Aorta (tissue), 5 donors: ENCODE measurements at regions of chr15 and their contacts with region 1.

Region 1: DNA sequence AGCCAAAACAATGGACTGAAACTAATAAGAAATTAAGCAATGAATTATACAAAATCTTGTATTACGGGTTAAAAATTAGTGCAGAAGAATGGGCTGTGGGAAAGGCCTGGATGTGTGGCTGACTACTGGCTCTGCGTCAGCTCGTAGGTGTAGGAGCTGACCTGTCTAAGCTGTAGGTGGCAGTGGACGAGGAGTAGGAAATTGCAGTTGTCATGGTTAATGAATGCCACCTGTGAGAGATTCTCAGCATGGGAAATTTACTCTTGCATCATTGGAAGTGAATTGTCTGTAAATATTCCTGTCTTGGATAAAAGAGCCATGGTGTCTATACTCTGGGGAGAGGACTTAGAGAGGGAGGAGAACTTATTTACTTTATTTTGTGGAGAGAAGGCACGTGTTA is 23.4 kb downstream of the CHRNA7 start:
- DNase-seq: no peak
- ATAC-seq: no peak
- H3K4me3 ChIP-seq: no peak overlapping the region
- H3K27ac ChIP-seq: no peak overlapping the region
- H3K4me1 ChIP-seq: no peaks in the 10 kb centered on the region
- H3K27me3 ChIP-seq: no peaks in the 10 kb centered on the region

Region 2: DNA sequence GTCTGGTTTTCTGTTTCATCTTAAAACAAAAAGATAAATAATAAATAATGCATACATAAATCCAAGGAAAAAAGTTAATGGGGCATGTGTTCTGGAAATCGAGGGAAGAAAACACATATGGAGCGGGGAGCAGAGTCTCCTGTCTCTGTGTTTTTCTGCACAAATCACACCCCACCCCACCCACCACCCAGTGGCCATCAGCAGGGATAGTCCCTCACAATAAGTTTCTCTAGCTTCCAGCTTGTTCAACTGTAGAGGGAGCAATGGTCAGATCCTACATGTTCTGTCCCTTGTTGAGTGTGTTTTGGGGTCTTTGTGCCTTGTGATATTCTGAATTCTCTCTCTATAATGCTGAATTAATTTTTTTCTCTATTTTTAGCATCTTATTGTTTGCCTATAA is 50.2 kb before region 1 on chr15:
- intact Hi-C with region 1: loop called in 1 of 2 experiments (anchors 10 kb)
- DNase-seq: no peak
- ATAC-seq: no peak
- H3K4me3 ChIP-seq: no peak overlapping the region
- H3K27ac ChIP-seq: no peak overlapping the region
- H3K4me1 ChIP-seq: no peaks in the 10 kb centered on the region
- H3K27me3 ChIP-seq: no peaks in the 10 kb centered on the region

Region 3: DNA sequence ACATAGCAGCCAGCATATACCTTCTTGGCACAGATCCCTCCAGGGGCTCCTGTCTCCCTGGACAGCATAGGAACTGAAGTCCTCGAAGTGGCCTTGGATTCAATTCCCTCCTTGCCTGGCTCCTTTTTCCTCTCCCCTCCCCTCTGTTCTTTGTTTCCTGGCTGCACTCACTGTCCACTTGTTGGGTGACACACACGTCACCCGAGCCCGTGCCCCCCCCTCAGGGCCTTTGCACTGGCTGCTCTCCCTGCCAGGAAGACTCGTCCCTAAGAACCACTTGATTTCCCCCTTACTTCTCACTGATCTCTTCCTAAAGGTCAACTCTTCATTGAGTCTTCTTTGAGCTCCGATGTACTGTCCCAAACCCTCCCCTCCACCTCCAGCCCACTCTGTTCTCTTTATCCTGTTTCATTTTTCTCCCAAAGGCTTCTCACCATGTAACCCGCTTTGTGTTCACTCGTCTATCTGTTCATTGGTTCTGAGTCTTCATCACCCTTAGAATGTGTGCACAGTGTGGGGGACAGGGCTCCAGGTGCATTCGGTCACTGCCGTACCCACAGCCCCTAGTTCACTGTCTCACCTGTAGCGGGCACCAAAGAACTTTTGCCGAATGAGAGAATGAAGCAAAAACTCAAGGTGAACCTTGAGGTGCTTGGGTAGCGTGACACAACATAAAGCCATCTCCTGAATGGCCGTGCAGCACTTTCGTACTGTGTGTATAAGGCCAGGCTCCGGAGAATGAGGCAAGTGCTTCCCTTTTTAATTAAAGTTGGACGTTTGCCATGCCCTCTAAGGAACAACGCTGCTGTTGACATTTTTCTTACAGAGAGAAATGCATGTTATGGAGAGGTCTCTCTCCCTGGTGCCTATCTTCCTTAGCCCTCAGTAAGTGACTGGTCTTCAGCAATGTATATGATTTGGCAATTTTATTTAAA is 50.6 kb after region 1 on chr15:
- intact Hi-C with region 1: no loop called
- DNase-seq: no peak
- ATAC-seq: no peak
- H3K4me3 ChIP-seq: no peak overlapping the region
- H3K27ac ChIP-seq: no peak overlapping the region
- H3K4me1 ChIP-seq: no peaks in the 10 kb centered on the region
- H3K27me3 ChIP-seq: no peaks in the 10 kb centered on the region